ENCODE measurements at regions of chr4 and their contacts with region 1.

Region 1: GRCh38 chr4:118684873-118685811 is at the start of gene METTL14:
- DNase-seq: peak; percentile 88
- ATAC-seq: peak; percentile 97
- H3K4me3 ChIP-seq: peak within 1 kb of the TSS; percentile 83 to 88 (median 85)
- H3K27ac ChIP-seq: peak within 1 kb of the TSS; percentile 81
- H3K4me1 ChIP-seq: peaks cover 37% of the 10 kb centered on the region
- H3K27me3 ChIP-seq: no peaks in the 10 kb centered on the region; a peak in 1 of 5 replicates
- CTCF ChIP-seq: no peak
- EP300 ChIP-seq: no peak
- POLR2A ChIP-seq: peak; percentile 74 to 89
- RAD21 ChIP-seq: 0 out of 2 replicates have a peak, but pooled peaks have one; percentile 20
- total RNA-seq, gene METTL14: 44.9 and 68.5 TPM in 2 replicates

Region 2: DNA sequence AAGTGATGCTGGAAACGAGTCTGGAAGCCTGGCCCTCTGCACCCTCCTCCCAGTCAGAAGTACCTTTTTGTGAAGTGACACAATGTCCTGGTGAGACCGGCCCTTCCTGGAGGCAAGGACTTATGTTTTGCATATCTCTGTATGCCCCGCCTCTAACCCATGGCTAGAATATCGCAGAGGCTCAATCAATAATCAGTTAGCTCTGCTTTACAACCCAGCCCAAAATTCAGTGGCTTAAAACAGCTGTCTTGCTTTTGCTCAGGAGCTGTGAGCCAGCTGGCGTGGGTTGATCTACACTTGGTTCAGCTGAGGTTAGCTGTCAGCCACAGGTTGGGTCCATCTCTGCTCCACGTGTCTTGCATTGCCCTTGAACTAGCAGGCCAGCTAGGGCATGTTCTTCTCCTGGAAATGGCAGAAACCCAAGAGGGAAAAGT is 98.8 kb before region 1 on chr4:
- CTCF ChIA-PET with region 1: no interaction called
- POLR2A ChIA-PET with region 1: interaction called, 5 read pairs
- in situ Hi-C with region 1: no loop called
- intact Hi-C with region 1: loop called (anchors 1 kb)
- DNase-seq: no peak
- ATAC-seq: peak; percentile 66
- H3K4me3 ChIP-seq: no peak overlapping the region
- H3K27ac ChIP-seq: no peak overlapping the region
- H3K4me1 ChIP-seq: peaks cover 13% of the 10 kb centered on the region; the same call in 1 of the 2 replicates
- H3K27me3 ChIP-seq: peaks cover 1 to 25% of the 10 kb centered on the region in 2 experiments; a peak in 3 of 5 replicates
- CTCF ChIP-seq: no peak
- EP300 ChIP-seq: no peak
- POLR2A ChIP-seq: no peak
- RAD21 ChIP-seq: no peak

Region 3: GRCh38 chr4:118752551-118752950 is 67.4 kb after region 1 on chr4:
- CTCF ChIA-PET with region 1: no interaction called
- POLR2A ChIA-PET with region 1: no interaction called
- in situ Hi-C with region 1: no loop called
- intact Hi-C with region 1: no loop called
- DNase-seq: no peak
- ATAC-seq: no peak
- H3K4me3 ChIP-seq: no peak overlapping the region
- H3K27ac ChIP-seq: no peak overlapping the region
- H3K4me1 ChIP-seq: peaks cover 27% of the 10 kb centered on the region
- H3K27me3 ChIP-seq: no peaks in the 10 kb centered on the region; a peak in 1 of 5 replicates
- CTCF ChIP-seq: no peak
- EP300 ChIP-seq: no peak
- POLR2A ChIP-seq: no peak
- RAD21 ChIP-seq: no peak

Region 4: GRCh38 chr4:118826723-118827444 is 141.7 kb after region 1 on chr4:
- CTCF ChIA-PET with region 1: no interaction called
- POLR2A ChIA-PET with region 1: no interaction called
- in situ Hi-C with region 1: no loop called
- intact Hi-C with region 1: no loop called
- DNase-seq: peak; percentile 6
- ATAC-seq: peak; percentile 83
- H3K4me3 ChIP-seq: no peak overlapping the region
- H3K27ac ChIP-seq: peak overlapping the region; percentile 56
- H3K4me1 ChIP-seq: peaks cover 46% of the 10 kb centered on the region
- H3K27me3 ChIP-seq: no peaks in the 10 kb centered on the region
- CTCF ChIP-seq: no peak
- EP300 ChIP-seq: no peak
- POLR2A ChIP-seq: no peak
- RAD21 ChIP-seq: no peak

Measured in HepG2 (cell line).